ENCODE measurements at regions of chr16 and their contacts with region 1.

Region 1: GRCh38 chr16:4586291-4586690 is 28.4 kb downstream of the UBALD1 start:
- DNase-seq: no peak
- ATAC-seq: no peak
- H3K4me3 Mint-ChIP-seq: no peak overlapping the region
- H3K27ac Mint-ChIP-seq: no peak overlapping the region
- H3K4me1 Mint-ChIP-seq: peaks cover 9% of the 10 kb centered on the region
- H3K27me3 Mint-ChIP-seq: peaks cover 7% of the 10 kb centered on the region
- CTCF ChIP-seq: no peak

Region 2: DNA sequence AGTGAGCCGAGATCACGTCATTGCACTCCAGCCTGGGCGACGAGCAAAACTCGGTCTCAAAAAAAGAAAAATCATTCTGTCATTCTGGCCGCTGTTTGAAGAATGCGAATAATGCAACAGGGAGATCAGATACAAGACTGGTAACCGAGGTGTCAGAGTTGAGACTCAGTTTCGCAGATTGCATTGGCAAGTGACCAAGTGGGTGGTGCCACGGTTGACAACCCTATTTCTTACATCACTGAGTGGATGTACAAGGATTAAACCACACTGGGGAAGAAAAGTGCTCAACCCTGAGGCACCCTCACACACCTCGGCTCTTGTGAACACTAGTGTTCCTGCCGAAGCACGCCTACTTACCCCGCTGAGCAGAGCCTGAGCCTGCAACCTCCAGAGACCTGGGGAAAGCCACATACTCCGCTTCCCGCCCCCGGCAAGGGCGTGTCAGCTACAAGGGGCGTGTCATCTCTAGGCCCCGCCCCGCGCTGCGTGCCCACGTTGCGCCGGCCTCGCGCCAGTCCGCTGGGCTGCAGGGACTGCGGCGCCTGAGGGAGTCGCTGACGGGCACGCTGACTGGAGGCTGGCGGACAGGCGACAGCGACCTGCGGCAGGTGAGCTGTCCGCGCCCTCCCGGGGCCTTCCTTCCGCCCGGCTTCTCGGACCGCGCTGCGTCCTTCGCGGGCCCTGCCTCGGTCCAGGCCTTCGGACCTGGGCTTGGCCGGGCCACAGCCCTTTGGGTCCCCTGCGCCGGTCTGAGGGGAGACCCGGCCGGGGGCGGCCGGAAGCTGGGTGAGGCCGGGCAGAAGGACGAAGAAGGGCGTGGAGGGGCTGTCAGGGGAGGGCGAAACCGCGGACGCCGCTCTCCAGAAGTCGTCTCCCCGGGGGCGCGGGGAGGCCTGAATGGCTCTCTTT is 110.2 kb before region 1 on chr16 and contains the start of gene HMOX2:
- CTCF ChIA-PET with region 1: interaction called, 12 read pairs
- POLR2A ChIA-PET with region 1: no interaction called
- DNase-seq: peak; percentile 96
- ATAC-seq: peak; percentile 85
- H3K4me3 Mint-ChIP-seq: peak within 1 kb of the TSS; percentile 72
- H3K27ac Mint-ChIP-seq: peak within 1 kb of the TSS; percentile 97
- H3K4me1 Mint-ChIP-seq: peaks cover 19% of the 10 kb centered on the region
- H3K27me3 Mint-ChIP-seq: peaks cover 16% of the 10 kb centered on the region
- CTCF ChIP-seq: no peak
- total RNA-seq, gene HMOX2: 29.5 to 42.6 TPM (median 31.1 TPM) in 3 replicates

Region 3: GRCh38 chr16:4511441-4512082 is 74.7 kb before region 1 on chr16:
- CTCF ChIA-PET with region 1: interaction called, 59 read pairs
- POLR2A ChIA-PET with region 1: no interaction called
- DNase-seq: peak; percentile 89
- ATAC-seq: peak; percentile 94
- H3K4me3 Mint-ChIP-seq: no peak overlapping the region
- H3K27ac Mint-ChIP-seq: peak overlapping the region; percentile 61; the same call in 1 of the 2 replicates
- H3K4me1 Mint-ChIP-seq: peaks cover 7% of the 10 kb centered on the region; the same call in 1 of the 2 replicates
- H3K27me3 Mint-ChIP-seq: no peaks in the 10 kb centered on the region
- CTCF ChIP-seq: peak; percentile 71

Region 4: DNA sequence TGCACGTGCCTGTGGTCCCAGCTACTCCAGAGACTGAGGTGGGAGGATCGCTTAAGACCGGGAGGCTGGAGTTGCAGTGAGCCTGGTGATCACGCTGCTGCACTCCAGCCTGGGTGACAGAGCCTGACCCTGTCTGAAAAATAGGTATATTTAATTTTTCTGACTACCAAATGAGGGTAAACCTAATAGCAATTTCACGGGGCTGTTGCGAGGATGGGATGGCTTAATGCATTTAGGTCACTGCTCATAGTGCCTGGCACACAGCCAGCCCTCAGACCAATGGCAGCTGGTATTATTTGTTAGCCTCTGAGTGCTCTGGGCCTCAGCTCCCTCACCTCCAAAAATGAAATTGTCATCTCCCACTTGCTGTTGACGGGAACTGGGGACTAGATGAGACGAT is 41.8 kb before region 1 on chr16:
- CTCF ChIA-PET with region 1: interaction called, 30 read pairs
- POLR2A ChIA-PET with region 1: no interaction called
- DNase-seq: no peak
- ATAC-seq: no peak
- H3K4me3 Mint-ChIP-seq: no peak overlapping the region
- H3K27ac Mint-ChIP-seq: no peak overlapping the region
- H3K4me1 Mint-ChIP-seq: no peaks in the 10 kb centered on the region
- H3K27me3 Mint-ChIP-seq: peaks cover 28% of the 10 kb centered on the region
- CTCF ChIP-seq: no peak

Region 5: GRCh38 chr16:4574919-4575705 is 11.2 kb before region 1 on chr16:
- CTCF ChIA-PET with region 1: interaction called, 35 read pairs
- POLR2A ChIA-PET with region 1: interaction called, 3 read pairs
- DNase-seq: peak; percentile 66
- ATAC-seq: peak; percentile 71
- H3K4me3 Mint-ChIP-seq: no peak overlapping the region
- H3K27ac Mint-ChIP-seq: no peak overlapping the region
- H3K4me1 Mint-ChIP-seq: peaks cover 18% of the 10 kb centered on the region
- H3K27me3 Mint-ChIP-seq: peaks cover 5% of the 10 kb centered on the region
- CTCF ChIP-seq: no peak

Region 6: GRCh38 chr16:4624015-4624826 is 37.9 kb after region 1 on chr16 and contains the start of gene MGRN1:
- CTCF ChIA-PET with region 1: interaction called, 17 read pairs
- POLR2A ChIA-PET with region 1: no interaction called
- DNase-seq: peak; percentile 94
- ATAC-seq: peak; percentile 93
- H3K4me3 Mint-ChIP-seq: peak within 1 kb of the TSS; percentile 97
- H3K27ac Mint-ChIP-seq: peak within 1 kb of the TSS; percentile 97
- H3K4me1 Mint-ChIP-seq: peaks cover 17% of the 10 kb centered on the region
- H3K27me3 Mint-ChIP-seq: no peaks in the 10 kb centered on the region
- CTCF ChIP-seq: peak; percentile 84
- total RNA-seq, gene MGRN1: 79.4 to 88.8 TPM (median 80.7 TPM) in 3 replicates

Region 7: DNA sequence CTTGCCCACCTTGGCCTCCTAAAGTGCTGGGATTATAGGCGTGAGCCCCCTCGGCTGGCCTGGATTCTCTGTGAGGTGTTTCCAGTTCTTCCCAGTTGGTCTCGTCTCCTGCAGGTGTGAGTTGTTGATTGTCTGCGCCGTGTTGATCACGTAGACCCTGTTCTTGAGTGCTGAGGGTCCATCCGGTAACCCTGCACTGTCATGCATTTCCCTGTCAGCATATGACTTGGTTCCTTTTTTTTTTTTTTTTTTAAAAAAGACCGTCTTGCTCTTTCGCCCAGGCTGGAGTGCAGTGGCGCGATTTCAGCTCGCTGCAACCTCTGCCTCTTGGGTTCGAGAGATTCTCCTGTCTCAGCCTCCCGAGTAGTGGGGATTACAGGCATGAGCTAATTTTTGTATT is 55.6 kb after region 1 on chr16:
- CTCF ChIA-PET with region 1: no interaction called
- POLR2A ChIA-PET with region 1: no interaction called
- DNase-seq: no peak
- ATAC-seq: no peak
- H3K4me3 Mint-ChIP-seq: no peak overlapping the region
- H3K27ac Mint-ChIP-seq: no peak overlapping the region
- H3K4me1 Mint-ChIP-seq: no peaks in the 10 kb centered on the region
- H3K27me3 Mint-ChIP-seq: no peaks in the 10 kb centered on the region
- CTCF ChIP-seq: no peak

Region 8: GRCh38 chr16:4780235-4780634 is 193.9 kb after region 1 on chr16:
- CTCF ChIA-PET with region 1: no interaction called
- POLR2A ChIA-PET with region 1: no interaction called
- DNase-seq: no peak
- ATAC-seq: no peak
- H3K4me3 Mint-ChIP-seq: no peak overlapping the region
- H3K27ac Mint-ChIP-seq: no peak overlapping the region
- H3K4me1 Mint-ChIP-seq: peaks cover 4% of the 10 kb centered on the region; the same call in 1 of the 2 replicates
- H3K27me3 Mint-ChIP-seq: no peaks in the 10 kb centered on the region; the same call in 1 of the 2 replicates
- CTCF ChIP-seq: no peak

Measured in WTC11 (cell line).